Activated CD4-positive, alpha-beta T cell treated with anti-CD3 and anti-CD28 coated beads for 36 hours (primary cell): ENCODE measurements at regions of chr12 and their contacts with region 1.

Region 1: DNA sequence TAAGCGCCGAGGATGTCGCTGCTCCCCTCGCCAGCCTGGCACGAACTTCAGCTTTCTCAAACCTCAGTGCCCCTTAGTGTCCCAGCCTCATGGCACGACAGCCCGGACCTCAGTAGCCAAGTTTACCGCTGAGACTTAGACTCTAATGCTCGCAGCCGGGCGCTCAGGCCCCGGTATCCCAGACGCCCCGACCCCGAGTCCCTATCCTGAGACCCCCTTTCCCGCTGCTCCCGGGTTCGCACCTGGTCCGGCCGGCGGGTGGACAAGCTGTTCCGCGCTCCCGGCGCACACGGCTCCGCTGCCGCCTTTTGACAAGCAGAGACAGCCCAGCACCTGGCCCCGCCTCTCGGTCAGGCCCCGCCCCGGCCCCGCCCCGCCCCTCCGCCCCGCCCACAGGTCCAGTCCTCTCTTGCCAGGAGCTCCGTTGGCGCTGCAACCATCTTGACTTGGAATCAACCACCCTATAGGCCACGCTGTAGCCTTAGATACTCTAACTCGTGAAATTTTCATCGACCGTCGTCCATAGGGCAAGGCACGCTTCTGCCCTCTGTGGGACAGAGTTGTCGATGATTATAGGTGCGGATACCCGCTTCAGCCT is at the start of gene VDR:
- DNase-seq: peak; percentile 88
- ATAC-seq: peak; percentile 76
- H3K4me3 Mint-ChIP-seq: peak within 1 kb of the TSS; percentile 94
- H3K27ac Mint-ChIP-seq: peak within 1 kb of the TSS; percentile 92
- H3K4me1 Mint-ChIP-seq: peaks cover 45% of the 10 kb centered on the region
- H3K27me3 Mint-ChIP-seq: peaks cover 20% of the 10 kb centered on the region
- total RNA-seq, gene VDR: 108 to 124 TPM

Region 2: GRCh38 chr12:47855502-47855901 is 49.3 kb before region 1 on chr12:
- CTCF ChIA-PET with region 1: interaction called, 10 read pairs
- POLR2A ChIA-PET with region 1: interaction called, 3 read pairs
- intact Hi-C with region 1: loop called (anchors 1 to 5 kb)
- DNase-seq: no peak
- ATAC-seq: no peak
- H3K4me3 Mint-ChIP-seq: no peak overlapping the region
- H3K27ac Mint-ChIP-seq: no peak overlapping the region
- H3K4me1 Mint-ChIP-seq: peaks cover 37% of the 10 kb centered on the region
- H3K27me3 Mint-ChIP-seq: no peaks in the 10 kb centered on the region

Region 3: GRCh38 chr12:47863467-47863866 is 41.3 kb before region 1 on chr12:
- CTCF ChIA-PET with region 1: interaction called, 10 read pairs
- POLR2A ChIA-PET with region 1: interaction called, 6 read pairs
- intact Hi-C with region 1: loop called (anchors 1 to 5 kb)
- DNase-seq: no peak
- ATAC-seq: no peak
- H3K4me3 Mint-ChIP-seq: no peak overlapping the region
- H3K27ac Mint-ChIP-seq: peak overlapping the region; percentile 31
- H3K4me1 Mint-ChIP-seq: peaks cover 73% of the 10 kb centered on the region
- H3K27me3 Mint-ChIP-seq: no peaks in the 10 kb centered on the region

Region 4: DNA sequence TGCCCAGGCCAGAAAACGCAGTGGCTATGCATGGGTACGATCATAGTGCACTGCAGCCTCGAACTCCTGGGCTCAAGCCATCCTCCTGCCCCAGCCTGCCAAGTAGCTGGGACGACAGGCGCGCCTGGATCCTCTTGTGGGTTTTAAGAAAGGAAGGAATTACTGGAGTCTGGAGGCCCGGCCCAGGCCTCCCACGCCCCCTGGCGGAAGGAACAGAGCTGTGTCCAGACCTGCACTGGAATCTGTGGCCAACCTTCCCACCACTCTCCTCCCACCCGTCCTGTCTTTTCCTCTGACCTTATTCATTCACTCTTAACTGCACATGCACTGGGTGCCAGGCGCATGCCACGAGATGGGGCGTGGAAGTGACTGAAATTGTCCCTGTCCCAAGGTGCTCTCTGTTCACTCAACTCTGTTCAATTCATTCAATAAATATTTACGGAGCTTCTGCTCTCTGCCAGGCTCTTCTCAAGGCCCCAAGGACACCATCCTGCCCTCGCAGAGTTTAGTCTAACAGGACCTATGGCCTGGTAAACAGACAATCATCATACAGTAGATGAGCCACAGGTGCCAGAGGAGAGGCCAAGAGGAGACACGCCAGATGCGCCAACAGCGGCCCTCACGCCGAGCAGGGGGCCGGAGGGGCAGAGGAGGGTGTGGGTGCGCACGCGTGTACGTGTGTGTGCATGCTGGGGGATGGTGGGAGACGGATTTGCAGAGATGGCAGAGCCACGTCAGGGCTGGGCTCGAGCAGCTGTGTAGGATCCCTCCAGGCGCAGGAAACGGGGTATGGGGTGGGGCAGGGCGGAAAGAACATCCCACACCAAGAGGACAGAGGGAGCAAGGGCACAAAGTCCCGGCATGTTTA is 44.9 kb after region 1 on chr12:
- CTCF ChIA-PET with region 1: interaction called, 11 read pairs
- POLR2A ChIA-PET with region 1: no interaction called
- intact Hi-C with region 1: loop called (anchors 1 kb)
- DNase-seq: peak; percentile 78
- ATAC-seq: peak; percentile 83
- H3K4me3 Mint-ChIP-seq: no peak overlapping the region
- H3K27ac Mint-ChIP-seq: peak overlapping the region; percentile 10
- H3K4me1 Mint-ChIP-seq: peaks cover 10% of the 10 kb centered on the region
- H3K27me3 Mint-ChIP-seq: peaks cover 3% of the 10 kb centered on the region

Region 5: GRCh38 chr12:48157018-48157888 is 252.4 kb after region 1 on chr12 and contains the start of gene ASB8:
- CTCF ChIA-PET with region 1: interaction called, 3 read pairs
- POLR2A ChIA-PET with region 1: no interaction called
- intact Hi-C with region 1: loop called (anchors 1 to 2 kb)
- DNase-seq: peak; percentile 100
- ATAC-seq: peak; percentile 96
- H3K4me3 Mint-ChIP-seq: peak within 1 kb of the TSS; percentile 88
- H3K27ac Mint-ChIP-seq: peak within 1 kb of the TSS; percentile 94
- H3K4me1 Mint-ChIP-seq: peaks cover 40% of the 10 kb centered on the region
- H3K27me3 Mint-ChIP-seq: no peaks in the 10 kb centered on the region
- total RNA-seq, gene ASB8: 28.8 to 33.0 TPM

Region 6: DNA sequence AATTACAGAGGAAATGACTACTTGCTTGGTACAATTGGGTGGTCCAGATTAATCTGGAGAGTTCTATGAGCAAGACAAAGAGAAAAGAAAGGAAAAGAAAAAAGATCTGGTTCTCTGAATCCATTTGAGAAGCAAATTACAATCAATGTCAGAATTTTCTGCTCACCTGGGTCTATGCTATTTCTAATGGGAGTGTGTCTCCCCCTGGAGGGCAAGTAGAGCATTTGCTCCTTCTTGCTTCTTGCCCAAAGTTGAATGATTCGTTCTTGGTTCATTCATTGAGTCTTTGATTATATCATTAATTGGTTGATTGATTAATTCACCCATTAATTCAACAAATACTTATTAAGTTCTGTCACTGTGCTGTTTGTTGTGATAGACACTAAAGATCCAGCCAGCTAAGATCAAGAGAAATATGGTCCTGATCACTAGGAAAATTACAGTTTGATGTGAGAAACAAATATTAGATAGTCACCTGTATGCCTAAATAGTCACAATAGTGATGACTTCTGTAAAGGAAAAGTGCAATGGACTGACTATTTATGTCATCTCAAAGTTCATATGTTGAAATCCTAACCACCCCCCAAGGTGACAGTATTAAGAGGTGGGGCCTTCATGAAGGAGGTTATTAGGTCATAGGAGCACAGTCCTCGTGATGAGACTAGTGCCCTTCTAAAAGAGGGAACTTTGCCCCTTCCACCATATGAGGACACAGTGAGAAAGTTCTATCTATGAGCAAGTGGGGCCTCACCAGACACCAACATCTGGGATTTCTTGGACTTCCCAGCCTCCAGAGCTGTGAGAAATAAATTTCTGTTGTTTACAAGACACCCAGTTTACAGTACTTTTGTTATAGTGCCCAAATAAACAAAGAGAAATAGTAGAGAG is 260.5 kb after region 1 on chr12:
- CTCF ChIA-PET with region 1: interaction called, 3 read pairs
- POLR2A ChIA-PET with region 1: no interaction called
- intact Hi-C with region 1: loop called in 1 of 2 experiments (anchors 2 kb)
- DNase-seq: peak; percentile 62
- ATAC-seq: peak; percentile 84
- H3K4me3 Mint-ChIP-seq: no peak overlapping the region
- H3K27ac Mint-ChIP-seq: no peak overlapping the region
- H3K4me1 Mint-ChIP-seq: peaks cover 7% of the 10 kb centered on the region
- H3K27me3 Mint-ChIP-seq: no peaks in the 10 kb centered on the region

Region 7: GRCh38 chr12:48183091-48183875 is 278.5 kb after region 1 on chr12 and contains the start of gene CCDC184:
- CTCF ChIA-PET with region 1: no interaction called
- POLR2A ChIA-PET with region 1: no interaction called
- intact Hi-C with region 1: loop called in 1 of 2 experiments (anchors 1 kb)
- DNase-seq: peak; percentile 78
- ATAC-seq: peak; percentile 80
- H3K4me3 Mint-ChIP-seq: peak within 1 kb of the TSS; percentile 81
- H3K27ac Mint-ChIP-seq: peak within 1 kb of the TSS; percentile 31
- H3K4me1 Mint-ChIP-seq: peaks cover 20% of the 10 kb centered on the region
- H3K27me3 Mint-ChIP-seq: peaks cover 34% of the 10 kb centered on the region
- total RNA-seq, gene CCDC184: 0.25 to 0.37 TPM